B cell (primary cell): ENCODE measurements at regions of chr10 and their contacts with region 1.

Region 1: GRCh38 chr10:119686439-119687191 is 35.4 kb downstream of the BAG3 start:
- DNase-seq: peak; percentile 90
- ATAC-seq: peak; percentile 91
- H3K4me3 ChIP-seq: peak overlapping the region in 4 of 5 experiments; percentile 31 to 63 (median 46)
- H3K4me3 Mint-ChIP-seq: peak overlapping the region; percentile 82
- H3K27ac ChIP-seq: no peak overlapping the region
- H3K27ac Mint-ChIP-seq: peak overlapping the region; percentile 72
- H3K4me1 ChIP-seq: peaks cover 14 to 26% of the 10 kb centered on the region in 2 donors
- H3K4me1 Mint-ChIP-seq: peaks cover 32% of the 10 kb centered on the region
- H3K27me3 ChIP-seq: no peaks in the 10 kb centered on the region
- H3K27me3 Mint-ChIP-seq: peaks cover 5% of the 10 kb centered on the region
- CTCF ChIP-seq: peak; percentile 95

Region 2: GRCh38 chr10:118698421-118698820 is 988.2 kb before region 1 on chr10:
- CTCF ChIA-PET with region 1: no interaction called
- POLR2A ChIA-PET with region 1: no interaction called
- intact Hi-C with region 1: no loop called
- DNase-seq: no peak
- ATAC-seq: peak; percentile 51
- H3K4me3 ChIP-seq: no peak overlapping the region
- H3K4me3 Mint-ChIP-seq: no peak overlapping the region
- H3K27ac ChIP-seq: no peak overlapping the region
- H3K27ac Mint-ChIP-seq: no peak overlapping the region
- H3K4me1 ChIP-seq: no peaks in the 10 kb centered on the region
- H3K4me1 Mint-ChIP-seq: peaks cover 6% of the 10 kb centered on the region
- H3K27me3 ChIP-seq: no peaks in the 10 kb centered on the region
- H3K27me3 Mint-ChIP-seq: no peaks in the 10 kb centered on the region
- CTCF ChIP-seq: no peak

Region 3: GRCh38 chr10:119705434-119705831 is 18.8 kb after region 1 on chr10:
- CTCF ChIA-PET with region 1: interaction called, 80 read pairs
- POLR2A ChIA-PET with region 1: interaction called, 16 read pairs
- intact Hi-C with region 1: loop called (anchors 1 kb)
- DNase-seq: peak; percentile 62
- ATAC-seq: peak; percentile 13
- H3K4me3 ChIP-seq: peak overlapping the region in 3 of 5 experiments; percentile 18 to 46 (median 42)
- H3K4me3 Mint-ChIP-seq: peak overlapping the region; percentile 90
- H3K27ac ChIP-seq: peak overlapping the region; percentile 94
- H3K27ac Mint-ChIP-seq: peak overlapping the region; percentile 98
- H3K4me1 ChIP-seq: peaks cover 93 to 97% of the 10 kb centered on the region in 2 donors
- H3K4me1 Mint-ChIP-seq: peaks cover 81% of the 10 kb centered on the region
- H3K27me3 ChIP-seq: no peaks in the 10 kb centered on the region
- H3K27me3 Mint-ChIP-seq: no peaks in the 10 kb centered on the region
- CTCF ChIP-seq: no peak

Region 4: DNA sequence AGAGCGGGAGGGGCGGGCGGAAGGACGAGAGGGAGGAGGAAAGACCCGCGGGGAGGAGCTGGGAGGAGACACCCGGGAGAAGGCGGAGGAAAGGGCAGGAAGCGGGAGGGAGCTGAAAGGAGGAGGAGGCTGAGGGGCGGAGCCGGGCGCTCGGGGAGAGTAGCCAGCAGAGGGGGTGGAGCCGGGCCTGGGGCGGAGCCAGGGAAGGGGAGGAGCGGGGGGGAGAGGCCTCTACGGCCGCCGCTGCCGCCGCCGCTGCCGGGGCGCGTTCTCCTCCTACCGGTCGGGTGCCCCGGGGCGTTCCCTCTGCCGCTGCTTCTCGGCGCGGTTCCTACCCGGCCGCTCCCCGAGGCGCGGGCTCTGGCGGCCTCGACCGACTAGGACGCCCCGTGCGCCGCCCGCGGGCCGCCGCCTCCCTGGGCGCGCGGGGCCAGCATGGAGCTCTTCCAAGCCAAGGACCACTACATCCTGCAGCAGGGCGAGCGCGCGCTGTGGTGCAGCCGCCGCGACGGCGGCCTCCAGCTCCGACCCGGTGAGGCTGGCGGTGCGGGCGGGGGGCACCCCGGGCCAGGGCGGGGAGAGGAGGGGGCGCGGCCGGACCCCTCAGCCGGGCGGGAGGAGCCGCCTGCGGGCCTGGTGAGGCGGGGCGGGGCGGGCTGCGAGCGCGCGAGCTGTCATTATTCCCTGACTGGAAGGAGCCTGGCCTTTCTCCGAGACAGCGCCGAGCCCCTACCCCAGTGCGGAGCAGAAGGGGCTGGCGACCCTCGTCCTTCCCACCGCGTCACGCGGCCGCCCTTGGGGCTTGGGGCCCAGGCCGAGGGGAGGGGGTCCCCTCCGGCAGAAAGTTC is 39.4 kb after region 1 on chr10 and contains the start of gene INPP5F:
- CTCF ChIA-PET with region 1: interaction called, 99 read pairs
- POLR2A ChIA-PET with region 1: interaction called, 4 read pairs
- intact Hi-C with region 1: loop called (anchors 1 kb)
- DNase-seq: peak; percentile 95
- ATAC-seq: peak; percentile 93
- H3K4me3 ChIP-seq: peak within 1 kb of the TSS; percentile 55 to 85 (median 70)
- H3K4me3 Mint-ChIP-seq: peak within 1 kb of the TSS; percentile 98
- H3K27ac ChIP-seq: peak within 1 kb of the TSS; percentile 73 to 90
- H3K27ac Mint-ChIP-seq: peak within 1 kb of the TSS; percentile 95
- H3K4me1 ChIP-seq: peaks cover 38 to 51% of the 10 kb centered on the region in 2 donors
- H3K4me1 Mint-ChIP-seq: peaks cover 48% of the 10 kb centered on the region
- H3K27me3 ChIP-seq: no peaks in the 10 kb centered on the region
- H3K27me3 Mint-ChIP-seq: no peaks in the 10 kb centered on the region
- CTCF ChIP-seq: peak; percentile 55
- total RNA-seq, gene INPP5F: 37.5 and 42.5 TPM in 2 replicates

Region 5: GRCh38 chr10:119750391-119751230 is 64.0 kb after region 1 on chr10:
- CTCF ChIA-PET with region 1: interaction called, 98 read pairs
- POLR2A ChIA-PET with region 1: no interaction called
- intact Hi-C with region 1: loop called (anchors 1 kb)
- DNase-seq: peak; percentile 81
- ATAC-seq: peak; percentile 97
- H3K4me3 ChIP-seq: peak overlapping the region in 1 of 5 experiments; percentile 25
- H3K4me3 Mint-ChIP-seq: peak overlapping the region; percentile 77
- H3K27ac ChIP-seq: peak overlapping the region; percentile 32 to 59
- H3K27ac Mint-ChIP-seq: peak overlapping the region; percentile 83
- H3K4me1 ChIP-seq: peaks cover 9 to 16% of the 10 kb centered on the region in 2 donors
- H3K4me1 Mint-ChIP-seq: peaks cover 29% of the 10 kb centered on the region
- H3K27me3 ChIP-seq: no peaks in the 10 kb centered on the region
- H3K27me3 Mint-ChIP-seq: no peaks in the 10 kb centered on the region
- CTCF ChIP-seq: peak; percentile 93

Region 6: GRCh38 chr10:119849031-119849789 is 162.6 kb after region 1 on chr10:
- CTCF ChIA-PET with region 1: interaction called, 11 read pairs
- POLR2A ChIA-PET with region 1: no interaction called
- intact Hi-C with region 1: no loop called
- DNase-seq: no peak
- ATAC-seq: no peak
- H3K4me3 ChIP-seq: no peak overlapping the region
- H3K4me3 Mint-ChIP-seq: no peak overlapping the region
- H3K27ac ChIP-seq: no peak overlapping the region
- H3K27ac Mint-ChIP-seq: no peak overlapping the region
- H3K4me1 ChIP-seq: peaks cover 4 to 5% of the 10 kb centered on the region in 2 donors
- H3K4me1 Mint-ChIP-seq: peaks cover 10% of the 10 kb centered on the region
- H3K27me3 ChIP-seq: no peaks in the 10 kb centered on the region
- H3K27me3 Mint-ChIP-seq: no peaks in the 10 kb centered on the region
- CTCF ChIP-seq: no peak

Region 7: GRCh38 chr10:119919826-119920225 is 233.2 kb after region 1 on chr10:
- CTCF ChIA-PET with region 1: no interaction called
- POLR2A ChIA-PET with region 1: no interaction called
- intact Hi-C with region 1: loop called (anchors 5 kb)
- DNase-seq: peak; percentile 58
- ATAC-seq: peak; percentile 61
- H3K4me3 ChIP-seq: peak overlapping the region in 1 of 5 experiments; percentile 13
- H3K4me3 Mint-ChIP-seq: peak overlapping the region; percentile 70
- H3K27ac ChIP-seq: peak overlapping the region; percentile 47 to 87
- H3K27ac Mint-ChIP-seq: peak overlapping the region; percentile 87
- H3K4me1 ChIP-seq: peaks cover 6 to 20% of the 10 kb centered on the region in 2 donors
- H3K4me1 Mint-ChIP-seq: peaks cover 19% of the 10 kb centered on the region
- H3K27me3 ChIP-seq: no peaks in the 10 kb centered on the region
- H3K27me3 Mint-ChIP-seq: no peaks in the 10 kb centered on the region
- CTCF ChIP-seq: no peak